Posterior cingulate gyrus (tissue), 11 donors: ENCODE measurements at regions of chr2 and their contacts with region 1.

Region 1: GRCh38 chr2:199798831-199799580 is 52.0 kb downstream of the FTCDNL1 start:
- DNase-seq: peak; percentile 39 to 93 (median 60)

Region 2: GRCh38 chr2:199757233-199757870 is 41.7 kb before region 1 on chr2:
- intact Hi-C with region 1: loop called (anchors 5 kb)
- DNase-seq: peak; percentile 75 to 97 (median 85)

Region 3: DNA sequence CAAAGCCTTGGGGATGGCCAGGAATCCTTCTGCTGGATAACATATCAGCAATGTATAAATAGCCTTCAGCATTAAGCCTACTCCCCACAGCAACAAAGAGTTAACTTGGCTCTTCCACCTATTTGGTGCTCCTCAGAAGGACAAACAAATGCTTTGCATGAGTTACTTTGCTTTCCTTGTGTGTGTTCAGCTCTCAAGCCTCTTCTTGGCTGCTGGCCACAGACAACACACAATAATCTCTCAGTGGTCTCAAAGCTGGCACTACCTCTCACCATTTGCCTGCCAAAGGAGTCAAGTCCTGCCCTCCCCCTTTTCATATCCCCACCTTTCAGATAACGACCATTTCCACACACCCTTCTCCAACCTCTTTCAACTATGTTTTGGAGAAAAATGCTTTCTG is 34.5 kb after region 1 on chr2:
- intact Hi-C with region 1: loop called (anchors 5 kb)
- DNase-seq: peak in 7 of 10 donors; percentile 24 to 83 (median 48)